Naive thymus-derived CD4-positive, alpha-beta T cell (primary cell): ENCODE measurements at regions of chr14 and their contacts with region 1.

Region 1: GRCh38 chr14:75230140-75231045 is 48.2 kb upstream of the FOS start:
- DNase-seq: peak in 6 of 9 donors; percentile 26 to 50 (median 41)
- ATAC-seq: peak; percentile 59
- H3K4me3 ChIP-seq: no peak overlapping the region
- H3K4me3 Mint-ChIP-seq: peak overlapping the region; percentile 3 to 79 (median 50)
- H3K27ac ChIP-seq: no peak overlapping the region
- H3K27ac Mint-ChIP-seq: peak overlapping the region; percentile 42 to 96 (median 73)
- H3K4me1 ChIP-seq: peaks cover 33 to 41% of the 10 kb centered on the region in 2 donors
- H3K4me1 Mint-ChIP-seq: peaks cover 43 to 75% (median 66%) of the 10 kb centered on the region in 7 donors
- H3K27me3 ChIP-seq: no peaks in the 10 kb centered on the region
- H3K27me3 Mint-ChIP-seq: peaks cover 0 to 22% (median 0%) of the 10 kb centered on the region in 5 donors

Region 2: DNA sequence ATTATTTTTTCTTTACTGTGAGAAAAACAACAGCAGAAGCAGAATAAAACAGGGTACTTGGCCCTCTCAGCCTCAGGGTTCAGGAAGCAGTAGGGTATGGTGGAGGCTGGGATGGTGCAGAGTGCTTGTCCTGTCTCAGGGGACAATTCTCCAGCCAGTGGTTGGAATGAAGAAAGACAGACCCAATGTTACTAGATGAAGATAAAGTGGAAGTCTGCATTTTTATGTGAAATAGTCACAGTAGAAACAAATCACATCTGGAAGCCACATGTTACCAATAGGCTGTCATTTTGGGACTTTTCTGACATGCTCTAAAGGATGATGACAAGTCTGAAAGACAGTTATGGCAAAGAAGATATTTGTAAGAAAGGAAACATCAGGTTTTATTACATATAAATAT is 386.7 kb before region 1 on chr14:
- CTCF ChIA-PET with region 1: no interaction called
- POLR2A ChIA-PET with region 1: no interaction called
- intact Hi-C with region 1: no loop called
- DNase-seq: no peak
- ATAC-seq: no peak
- H3K4me3 ChIP-seq: no peak overlapping the region
- H3K4me3 Mint-ChIP-seq: no peak overlapping the region
- H3K27ac ChIP-seq: no peak overlapping the region
- H3K27ac Mint-ChIP-seq: peak overlapping the region in 6 of 9 donors; percentile 12 to 90 (median 44)
- H3K4me1 ChIP-seq: peaks cover 26 to 29% of the 10 kb centered on the region in 2 donors
- H3K4me1 Mint-ChIP-seq: peaks cover 21 to 59% (median 50%) of the 10 kb centered on the region in 7 donors
- H3K27me3 ChIP-seq: no peaks in the 10 kb centered on the region
- H3K27me3 Mint-ChIP-seq: no peaks in the 10 kb centered on the region

Region 3: DNA sequence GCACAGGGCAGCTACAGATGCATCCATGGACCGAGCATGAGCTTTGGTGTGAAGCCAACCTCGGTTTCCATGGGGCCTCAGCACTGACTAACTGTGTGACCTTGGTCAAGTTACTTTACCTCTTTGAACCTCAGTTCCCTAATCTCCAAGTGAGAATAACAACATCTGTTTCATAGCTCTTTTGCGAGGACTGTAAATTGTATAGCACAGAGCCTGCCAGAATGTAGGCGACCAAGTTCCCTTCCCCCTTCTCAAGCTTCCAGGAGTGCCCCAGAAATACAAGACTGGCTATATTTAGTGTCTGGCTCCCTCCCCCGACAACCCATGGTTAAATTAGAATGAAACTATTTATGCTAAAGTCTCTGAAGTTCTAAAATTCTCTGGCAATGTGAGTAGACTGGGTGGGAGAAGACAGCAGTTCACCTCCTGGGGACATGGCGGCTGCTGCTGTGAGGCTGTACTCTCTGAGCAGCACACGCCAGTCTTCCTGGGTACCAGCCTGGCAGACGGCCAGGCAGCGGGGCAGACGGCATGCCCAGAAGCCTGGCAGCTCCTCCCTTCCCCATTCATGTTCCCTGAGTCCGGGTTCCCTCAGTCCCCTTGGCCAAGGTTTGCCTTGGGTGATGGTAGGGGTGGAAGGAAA is 32.0 kb before region 1 on chr14:
- CTCF ChIA-PET with region 1: no interaction called
- POLR2A ChIA-PET with region 1: no interaction called
- intact Hi-C with region 1: loop called in 1 of 2 experiments (anchors 5 kb)
- DNase-seq: no peak
- ATAC-seq: no peak
- H3K4me3 ChIP-seq: no peak overlapping the region
- H3K4me3 Mint-ChIP-seq: no peak overlapping the region
- H3K27ac ChIP-seq: no peak overlapping the region
- H3K27ac Mint-ChIP-seq: no peak overlapping the region
- H3K4me1 ChIP-seq: no peaks in the 10 kb centered on the region
- H3K4me1 Mint-ChIP-seq: peaks cover 0 to 13% (median 0%) of the 10 kb centered on the region in 7 donors
- H3K27me3 ChIP-seq: no peaks in the 10 kb centered on the region
- H3K27me3 Mint-ChIP-seq: peaks cover 0 to 16% (median 0%) of the 10 kb centered on the region in 5 donors

Region 4: DNA sequence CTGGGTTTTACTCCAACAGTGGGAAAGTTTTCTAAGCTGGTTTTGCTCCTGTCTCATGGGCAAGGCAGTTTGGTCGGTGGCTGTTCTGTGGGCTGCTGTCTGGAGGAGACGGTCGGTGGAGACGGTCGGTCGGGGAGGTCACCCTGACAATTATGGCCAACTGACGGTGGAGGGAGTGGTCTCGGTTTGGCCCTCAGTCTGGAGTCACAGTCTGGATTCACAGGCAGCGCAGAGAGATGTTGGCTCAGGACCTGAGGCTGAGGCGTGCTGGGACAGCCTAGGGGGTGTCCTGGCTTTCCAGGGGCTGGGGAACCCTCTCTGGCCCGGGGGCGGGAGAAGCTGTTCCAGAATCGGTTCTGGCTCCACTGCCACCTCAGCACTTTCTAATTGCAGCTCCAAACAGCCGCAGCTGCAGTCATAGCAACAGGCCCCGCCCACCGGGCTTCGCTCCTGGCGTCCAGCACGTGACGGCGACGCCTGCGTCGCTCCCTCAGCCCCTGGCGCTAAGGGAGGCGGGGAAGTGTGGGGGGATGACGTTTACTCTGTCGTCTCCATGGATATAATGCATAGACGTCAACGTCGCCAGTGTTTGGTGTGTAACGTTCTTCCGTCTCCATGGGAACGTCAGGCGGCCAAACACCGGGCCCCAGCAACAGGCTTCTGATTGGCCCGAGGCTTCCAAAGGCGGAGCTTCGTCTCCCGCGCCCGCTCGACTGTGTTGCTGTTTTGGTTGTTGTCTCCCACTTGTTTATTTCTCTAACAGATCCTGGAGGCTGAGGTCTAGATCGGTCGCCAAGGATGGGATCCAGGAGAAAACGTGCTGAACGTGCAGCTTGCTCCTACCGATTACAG is 28.4 kb after region 1 on chr14:
- CTCF ChIA-PET with region 1: no interaction called
- POLR2A ChIA-PET with region 1: interaction called, 3 read pairs
- intact Hi-C with region 1: loop called (anchors 1 kb)
- DNase-seq: peak; percentile 97 to 100 (median 100)
- ATAC-seq: peak; percentile 94
- H3K4me3 ChIP-seq: peak overlapping the region; percentile 75
- H3K4me3 Mint-ChIP-seq: peak overlapping the region; percentile 75 to 95 (median 92)
- H3K27ac ChIP-seq: peak overlapping the region; percentile 94
- H3K27ac Mint-ChIP-seq: peak overlapping the region; percentile 98 to 100 (median 100)
- H3K4me1 ChIP-seq: peaks cover 16 to 19% of the 10 kb centered on the region in 2 donors
- H3K4me1 Mint-ChIP-seq: peaks cover 14 to 50% (median 32%) of the 10 kb centered on the region in 7 donors
- H3K27me3 ChIP-seq: peaks cover 0 to 3% of the 10 kb centered on the region in 2 donors
- H3K27me3 Mint-ChIP-seq: peaks cover 0 to 74% (median 0%) of the 10 kb centered on the region in 5 donors

Region 5: DNA sequence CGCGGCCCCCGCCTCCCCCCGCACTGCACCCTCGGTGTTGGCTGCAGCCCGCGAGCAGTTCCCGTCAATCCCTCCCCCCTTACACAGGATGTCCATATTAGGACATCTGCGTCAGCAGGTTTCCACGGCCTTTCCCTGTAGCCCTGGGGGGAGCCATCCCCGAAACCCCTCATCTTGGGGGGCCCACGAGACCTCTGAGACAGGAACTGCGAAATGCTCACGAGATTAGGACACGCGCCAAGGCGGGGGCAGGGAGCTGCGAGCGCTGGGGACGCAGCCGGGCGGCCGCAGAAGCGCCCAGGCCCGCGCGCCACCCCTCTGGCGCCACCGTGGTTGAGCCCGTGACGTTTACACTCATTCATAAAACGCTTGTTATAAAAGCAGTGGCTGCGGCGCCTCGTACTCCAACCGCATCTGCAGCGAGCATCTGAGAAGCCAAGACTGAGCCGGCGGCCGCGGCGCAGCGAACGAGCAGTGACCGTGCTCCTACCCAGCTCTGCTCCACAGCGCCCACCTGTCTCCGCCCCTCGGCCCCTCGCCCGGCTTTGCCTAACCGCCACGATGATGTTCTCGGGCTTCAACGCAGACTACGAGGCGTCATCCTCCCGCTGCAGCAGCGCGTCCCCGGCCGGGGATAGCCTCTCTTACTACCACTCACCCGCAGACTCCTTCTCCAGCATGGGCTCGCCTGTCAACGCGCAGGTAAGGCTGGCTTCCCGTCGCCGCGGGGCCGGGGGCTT is 48.2 kb after region 1 on chr14 and contains the start of gene FOS:
- CTCF ChIA-PET with region 1: no interaction called
- POLR2A ChIA-PET with region 1: no interaction called
- intact Hi-C with region 1: loop called in 1 of 2 experiments (anchors 1 kb)
- DNase-seq: peak; percentile 87 to 99 (median 98)
- ATAC-seq: peak; percentile 74
- H3K4me3 ChIP-seq: peak within 1 kb of the TSS; percentile 86
- H3K4me3 Mint-ChIP-seq: peak within 1 kb of the TSS; percentile 92 to 97 (median 94)
- H3K27ac ChIP-seq: peak within 1 kb of the TSS; percentile 91
- H3K27ac Mint-ChIP-seq: peak within 1 kb of the TSS; percentile 87 to 100 (median 99)
- H3K4me1 ChIP-seq: peaks cover 32 to 34% of the 10 kb centered on the region in 2 donors
- H3K4me1 Mint-ChIP-seq: peaks cover 21 to 64% (median 50%) of the 10 kb centered on the region in 7 donors
- H3K27me3 ChIP-seq: peaks cover 4 to 5% of the 10 kb centered on the region in 2 donors
- H3K27me3 Mint-ChIP-seq: peaks cover 0 to 81% (median 3%) of the 10 kb centered on the region in 5 donors
- total RNA-seq, gene FOS: 9.4 to 4,557 (median 14.4) TPM